Right ventricle myocardium inferior (tissue), 1 donor: ENCODE measurements at regions of chr15 and their contacts with region 1.

Region 1: DNA sequence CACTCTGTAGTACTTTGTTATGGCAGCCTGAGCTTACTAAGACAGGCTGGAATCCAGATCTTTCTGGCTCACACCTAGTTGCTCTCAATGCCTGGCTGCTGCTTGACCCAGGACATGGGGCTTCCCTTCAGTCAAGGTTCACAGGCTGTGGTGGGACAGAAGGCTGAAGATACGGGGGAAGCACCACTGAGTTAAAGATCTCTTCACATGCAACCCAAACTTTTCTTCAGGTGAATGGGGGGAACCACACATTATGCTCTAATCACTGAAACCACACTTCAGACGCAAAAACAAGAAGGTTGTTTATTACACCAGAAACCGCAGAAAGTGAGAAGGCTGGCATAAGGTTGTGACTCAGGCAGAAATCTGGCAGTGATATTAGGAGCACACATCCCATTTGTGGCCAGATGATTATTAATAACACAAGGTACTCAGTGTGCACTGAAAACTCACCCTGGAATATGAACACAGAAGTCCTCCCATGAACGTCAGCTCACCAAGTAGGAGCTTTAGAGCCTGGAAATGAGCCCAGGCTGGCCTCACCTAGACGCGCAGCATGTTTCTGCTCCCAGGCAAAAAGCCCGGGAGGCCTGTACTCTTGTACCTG is 230.5 kb upstream of the CHRNA7 start:
- DNase-seq: no peak
- ATAC-seq: peak; percentile 84

Region 2: GRCh38 chr15:31840849-31841476 is 41.1 kb after region 1 on chr15:
- intact Hi-C with region 1: loop called (anchors 2 kb)
- DNase-seq: no peak
- ATAC-seq: peak; percentile 92